ENCODE measurements at regions of chr5 and their contacts with region 1.

Region 1: GRCh38 chr5:90529194-90529938 is at the start of gene LYSMD3:
- DNase-seq: peak; percentile 99
- total RNA-seq, gene LYSMD3: 14.8 TPM

Region 2: GRCh38 chr5:90409318-90410177 is 119.8 kb before region 1 on chr5 and contains the start of gene CETN3:
- intact Hi-C with region 1: loop called (anchors 2 kb)
- DNase-seq: peak; percentile 95
- total RNA-seq, gene CETN3: 16.0 TPM

Region 3: DNA sequence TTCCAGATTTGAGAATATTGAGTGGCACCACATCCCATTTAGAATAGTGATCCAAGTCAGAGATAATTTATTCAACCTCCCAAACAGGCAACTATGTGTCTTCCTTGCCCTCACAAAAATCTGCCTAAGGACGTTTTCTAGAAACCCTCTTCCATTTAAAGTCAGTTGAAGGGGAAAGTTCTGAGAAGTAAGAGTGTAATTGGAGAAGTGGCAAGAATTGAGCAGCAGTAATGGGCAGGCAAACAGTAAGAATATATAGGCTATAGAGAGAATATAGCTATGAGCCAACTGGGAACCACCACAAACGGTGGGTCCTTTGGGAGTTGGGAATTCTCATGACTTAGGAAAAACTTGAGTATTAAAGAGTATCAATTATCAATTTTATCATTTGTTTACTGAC is 88.7 kb before region 1 on chr5:
- intact Hi-C with region 1: loop called (anchors 2 kb)
- DNase-seq: no peak

Region 4: DNA sequence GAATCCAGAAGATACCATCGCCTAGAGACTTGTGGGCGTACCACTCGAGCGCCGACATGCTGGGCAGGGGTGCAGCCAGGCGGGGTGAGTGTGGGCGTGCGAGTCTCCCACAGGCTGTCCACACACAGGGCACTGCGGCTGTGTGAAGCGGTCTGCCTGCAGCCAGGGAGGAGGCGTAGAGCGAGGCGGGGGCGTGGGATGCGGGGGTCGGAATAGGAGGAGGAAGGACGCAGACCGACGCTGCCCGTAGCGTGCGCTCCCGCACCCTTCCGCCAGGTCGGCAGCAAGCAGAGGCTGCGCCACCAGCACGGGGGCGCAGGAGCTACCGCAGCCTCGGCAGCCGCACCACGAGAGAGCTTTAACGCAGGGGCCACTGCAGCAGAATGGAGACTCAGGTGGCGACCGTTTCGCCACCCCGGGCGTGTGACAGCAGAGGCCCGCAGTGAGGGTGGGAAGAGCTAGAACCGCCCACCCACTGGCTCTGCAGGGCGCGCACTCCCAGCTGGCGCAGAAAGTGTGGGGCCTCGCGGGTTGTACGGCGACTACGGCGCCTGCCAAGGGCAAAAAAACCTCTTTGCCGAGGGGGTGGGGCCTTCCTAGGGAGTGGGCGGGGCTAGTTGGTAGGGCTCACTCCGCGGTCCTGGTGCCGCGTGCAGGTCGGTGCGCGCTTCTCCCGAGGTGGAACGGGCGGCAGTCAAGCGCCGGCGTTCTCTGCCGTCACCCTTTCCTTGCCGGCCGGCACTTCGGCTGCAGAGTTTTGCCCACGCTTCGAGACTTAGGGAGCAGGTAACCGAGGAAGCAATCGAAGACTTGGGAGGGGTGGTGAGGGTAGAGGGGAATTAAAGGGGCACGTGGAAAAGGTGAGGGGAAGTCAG is 54.9 kb before region 1 on chr5 and contains the starts of genes MBLAC2 and POLR3G:
- intact Hi-C with region 1: loop called (anchors 1 kb)
- DNase-seq: peak; percentile 96
- total RNA-seq, gene MBLAC2: 2.9 TPM
- total RNA-seq, gene POLR3G: 0.97 TPM

Region 5: DNA sequence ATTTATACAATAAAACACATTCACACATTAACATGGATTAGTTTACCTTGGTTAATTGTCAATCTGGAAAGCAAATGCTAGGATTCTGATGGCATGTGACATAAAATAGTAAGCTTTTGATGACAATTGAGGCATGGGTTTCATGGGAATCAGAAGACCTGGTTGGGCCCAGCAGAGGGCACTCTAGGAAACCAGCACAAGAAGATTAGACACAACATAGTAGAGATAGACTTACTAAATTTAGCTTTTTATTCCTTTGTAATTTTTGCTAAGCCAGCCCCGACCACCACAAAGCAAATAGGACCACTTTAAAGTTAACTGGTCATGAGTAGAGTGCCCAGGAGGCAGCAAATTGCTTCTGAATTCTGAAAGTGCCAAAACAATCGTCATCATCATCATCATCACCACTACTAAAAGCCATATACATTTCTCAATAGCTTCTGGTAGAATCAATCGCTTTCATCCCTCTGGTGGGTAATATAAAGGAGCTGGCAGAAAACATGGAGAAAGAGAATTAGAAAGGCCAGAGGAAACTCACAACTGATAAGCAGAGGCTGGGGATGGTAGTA is 690.5 kb after region 1 on chr5:
- intact Hi-C with region 1: no loop called
- DNase-seq: no peak

Measured in cardiac septum (tissue), 1 donor.